Activated T-helper 2 cell treated with anti-CD3 and anti-CD28 coated beads, Interferon-gamma antibody, Interleukin-2, Interleukin-4, amounts not matched to agents 10 μg/mL and 5 μg/mL and 100 μg/mL, durations not matched to agents 14 hours and 24 hours and 36 hours (primary cell): ENCODE measurements at regions of chr11 and their contacts with region 1.

Region 1: DNA sequence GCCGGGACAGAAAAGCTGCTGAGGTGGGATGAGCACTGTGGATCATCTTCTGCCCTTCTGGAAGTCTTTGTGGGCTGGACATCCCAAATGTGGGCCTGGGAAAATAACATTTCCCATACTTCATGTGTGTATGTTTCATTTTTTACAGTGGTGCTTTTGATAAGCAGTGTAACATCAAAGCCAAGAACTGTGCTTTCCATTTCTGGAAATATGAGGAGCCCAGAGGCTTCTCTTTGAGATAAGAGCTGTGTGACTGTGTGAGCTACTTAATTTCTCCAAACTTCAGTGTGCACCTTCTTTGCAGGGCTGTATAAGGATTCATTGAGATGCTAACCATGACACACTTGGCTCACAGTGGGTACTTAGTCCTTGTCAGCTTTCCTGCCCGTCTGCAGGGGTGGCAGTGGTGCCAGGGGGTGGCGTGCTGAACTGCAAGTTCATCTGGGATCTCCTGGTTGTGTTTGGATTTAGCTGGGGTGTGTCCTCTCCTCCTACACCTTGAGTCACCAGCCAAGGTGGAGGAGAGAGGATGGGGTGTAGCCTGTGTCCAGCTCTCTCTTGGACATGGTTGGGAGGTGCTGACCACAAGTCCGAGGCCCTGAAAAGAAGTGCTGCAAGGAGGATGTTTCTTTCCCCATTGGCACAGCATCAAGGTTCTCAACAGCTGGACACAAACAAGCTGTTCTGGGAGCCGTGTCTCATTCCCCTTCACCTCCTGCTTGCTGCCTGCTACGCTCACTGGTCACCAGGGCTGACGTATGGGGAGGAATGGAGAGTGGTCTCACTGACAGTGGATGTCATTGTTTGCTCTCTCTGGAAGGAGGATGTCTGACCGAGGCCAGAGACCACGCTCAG is 139.4 kb downstream of the TEAD1 start:
- DNase-seq: no peak
- H3K4me3 Mint-ChIP-seq: no peak overlapping the region
- H3K27ac Mint-ChIP-seq: no peak overlapping the region
- H3K4me1 Mint-ChIP-seq: peaks cover 50% of the 10 kb centered on the region
- H3K27me3 Mint-ChIP-seq: peaks cover 39% of the 10 kb centered on the region

Region 2: DNA sequence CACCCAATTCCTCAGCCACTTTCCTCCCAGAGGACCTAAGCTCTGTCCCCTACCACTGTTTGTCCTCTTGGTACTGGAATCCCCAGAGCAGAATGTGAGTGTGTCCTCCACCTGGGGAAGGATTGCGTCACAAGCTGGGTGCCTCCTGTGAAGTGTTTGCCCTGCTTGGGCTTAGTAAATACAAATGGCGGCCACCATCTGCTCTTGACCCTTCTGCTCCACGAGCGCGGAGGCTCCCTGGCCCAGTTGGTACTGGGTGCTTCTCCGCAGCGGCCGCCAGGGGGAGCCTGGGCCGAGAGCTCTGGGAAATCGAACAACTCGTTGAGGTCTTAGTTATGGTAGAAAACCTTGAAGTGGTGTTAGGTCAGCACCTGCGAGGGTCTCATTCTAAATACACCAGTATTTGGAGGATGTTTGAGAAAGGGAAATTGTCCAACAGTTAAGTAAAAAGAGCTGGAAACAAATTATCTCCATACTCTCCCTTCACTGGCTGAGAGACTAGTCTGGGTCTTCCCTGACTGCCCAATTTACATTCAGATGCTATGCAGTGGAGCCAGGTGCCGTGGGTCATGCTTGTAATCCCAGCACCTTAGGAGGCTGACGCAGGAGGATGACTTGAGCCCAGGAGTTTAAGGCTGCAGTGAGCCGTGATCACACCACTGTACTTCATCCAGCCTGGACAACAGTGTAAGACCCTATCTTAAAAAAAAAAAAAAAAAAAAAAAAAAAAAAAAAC is 214.0 kb before region 1 on chr11:
- intact Hi-C with region 1: loop called (anchors 10 kb)
- DNase-seq: peak; percentile 18
- H3K4me3 Mint-ChIP-seq: no peak overlapping the region
- H3K27ac Mint-ChIP-seq: no peak overlapping the region
- H3K4me1 Mint-ChIP-seq: no peaks in the 10 kb centered on the region
- H3K27me3 Mint-ChIP-seq: peaks cover 10% of the 10 kb centered on the region

Region 3: DNA sequence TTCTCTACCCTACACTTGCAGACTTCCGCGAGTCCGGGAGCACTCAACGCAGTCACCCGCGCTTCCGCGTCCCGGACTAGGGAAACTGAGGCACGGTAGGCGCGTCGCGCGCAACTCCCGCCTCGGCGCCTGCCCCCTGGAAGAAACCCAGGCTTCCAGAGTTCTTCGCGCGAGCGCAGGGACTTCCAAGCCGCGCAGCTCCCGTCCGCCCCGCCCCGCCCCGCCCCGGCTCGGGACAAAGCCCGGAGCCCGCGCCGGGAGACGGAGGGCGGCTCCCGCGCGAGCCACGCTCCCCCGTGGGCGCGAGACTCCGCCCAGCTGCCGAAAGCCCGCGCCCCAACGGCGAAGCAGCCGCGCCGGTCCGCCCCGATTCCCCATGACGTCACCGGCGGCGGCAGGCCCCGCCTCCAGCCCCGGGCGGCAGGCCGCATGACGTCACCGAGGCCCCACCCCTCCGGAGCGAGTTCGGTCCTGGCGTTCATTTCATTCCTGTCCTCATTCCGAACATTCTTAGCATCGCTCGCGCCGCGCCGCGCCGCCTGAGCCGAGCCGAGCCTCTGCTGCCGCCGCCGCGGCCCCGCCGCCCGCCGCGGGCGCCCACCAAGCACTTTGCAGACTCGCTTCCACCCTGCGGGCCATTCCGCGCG is 139.6 kb before region 1 on chr11 and contains the start of gene TEAD1:
- intact Hi-C with region 1: loop called (anchors 10 kb)
- DNase-seq: peak; percentile 85
- H3K4me3 Mint-ChIP-seq: peak within 1 kb of the TSS; percentile 80
- H3K27ac Mint-ChIP-seq: no peak within 1 kb of the TSS
- H3K4me1 Mint-ChIP-seq: peaks cover 6% of the 10 kb centered on the region
- H3K27me3 Mint-ChIP-seq: peaks cover 64% of the 10 kb centered on the region
- total RNA-seq, gene TEAD1: 1.0 and 1.3 TPM in 2 replicates

Region 4: GRCh38 chr11:12769834-12770345 is 43.7 kb before region 1 on chr11:
- intact Hi-C with region 1: loop called (anchors 5 kb)
- DNase-seq: no peak
- H3K4me3 Mint-ChIP-seq: no peak overlapping the region
- H3K27ac Mint-ChIP-seq: no peak overlapping the region
- H3K4me1 Mint-ChIP-seq: peaks cover 9% of the 10 kb centered on the region
- H3K27me3 Mint-ChIP-seq: peaks cover 16% of the 10 kb centered on the region

Region 5: DNA sequence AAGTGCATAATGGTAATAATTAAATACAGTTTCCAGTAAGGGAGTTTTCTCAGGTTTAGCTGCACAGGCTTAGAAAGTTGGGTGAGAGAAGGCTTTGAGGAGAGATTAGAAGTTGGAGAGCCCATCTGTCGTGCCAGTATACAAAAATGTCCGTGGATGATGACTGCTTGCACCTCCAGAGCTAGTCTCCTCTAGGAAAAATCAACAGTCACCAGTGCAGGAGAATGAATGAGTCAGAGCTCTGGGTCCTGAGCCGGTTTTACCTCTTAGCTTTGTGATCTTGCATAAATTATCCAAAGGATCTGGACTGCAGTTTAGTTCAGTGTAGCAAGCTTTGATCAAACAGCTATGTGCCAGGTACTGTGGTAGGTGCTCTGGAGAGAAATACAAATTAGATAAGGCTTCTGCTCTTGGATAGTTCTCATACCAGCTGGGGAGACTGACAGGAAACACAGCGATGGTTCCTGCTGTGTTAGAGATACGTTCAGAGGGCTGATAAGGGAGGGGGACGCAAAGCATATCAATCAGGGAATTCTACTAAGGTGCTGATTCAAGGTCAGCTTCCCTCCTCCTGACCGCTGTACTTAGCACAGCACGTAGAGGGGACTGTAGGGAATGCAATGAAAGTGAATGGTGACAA is 13.4 kb before region 1 on chr11:
- intact Hi-C with region 1: loop called (anchors 2 kb)
- DNase-seq: no peak
- H3K4me3 Mint-ChIP-seq: no peak overlapping the region
- H3K27ac Mint-ChIP-seq: no peak overlapping the region
- H3K4me1 Mint-ChIP-seq: no peaks in the 10 kb centered on the region
- H3K27me3 Mint-ChIP-seq: peaks cover 49% of the 10 kb centered on the region

Region 6: GRCh38 chr11:13105237-13105844 is 291.7 kb after region 1 on chr11:
- intact Hi-C with region 1: no loop called
- DNase-seq: no peak
- H3K4me3 Mint-ChIP-seq: no peak overlapping the region
- H3K27ac Mint-ChIP-seq: no peak overlapping the region
- H3K4me1 Mint-ChIP-seq: no peaks in the 10 kb centered on the region
- H3K27me3 Mint-ChIP-seq: peaks cover 11% of the 10 kb centered on the region